Activated T-helper 1 cell treated with anti-CD3 and anti-CD28 coated beads, Interleukin-12 subunit alpha, Interleukin-12 subunit beta, Interleukin-2, Interleukin-4 antibody, amounts not matched to agents 30 ng/mL and 10 ng/mL and 1 ng/mL, durations not matched to agents 14 hours and 24 hours and 36 hours (primary cell): ENCODE measurements at regions of chr17 and their contacts with region 1.

Region 1: GRCh38 chr17:2401426-2402221 is 764 bp upstream of the MNT start:
- DNase-seq: peak; percentile 100
- H3K4me3 Mint-ChIP-seq: peak overlapping the region; percentile 93
- H3K27ac Mint-ChIP-seq: peak overlapping the region; percentile 98
- H3K4me1 Mint-ChIP-seq: peaks cover 54% of the 10 kb centered on the region
- H3K27me3 Mint-ChIP-seq: no peaks in the 10 kb centered on the region

Region 2: GRCh38 chr17:497241-498034 is 1904.2 kb before region 1 on chr17:
- intact Hi-C with region 1: no loop called
- DNase-seq: no peak
- H3K4me3 Mint-ChIP-seq: peak overlapping the region; percentile 71
- H3K27ac Mint-ChIP-seq: peak overlapping the region; percentile 91
- H3K4me1 Mint-ChIP-seq: peaks cover 53% of the 10 kb centered on the region
- H3K27me3 Mint-ChIP-seq: no peaks in the 10 kb centered on the region

Region 3: GRCh38 chr17:2303204-2304188 is 98.1 kb before region 1 on chr17 and contains the starts of genes SMG6 and SRR:
- intact Hi-C with region 1: loop called (anchors 1 kb)
- DNase-seq: peak; percentile 88
- H3K4me3 Mint-ChIP-seq: peak within 1 kb of the TSS; percentile 92
- H3K27ac Mint-ChIP-seq: peak within 1 kb of the TSS; percentile 85
- H3K4me1 Mint-ChIP-seq: peaks cover 46% of the 10 kb centered on the region
- H3K27me3 Mint-ChIP-seq: no peaks in the 10 kb centered on the region
- total RNA-seq, gene SMG6: 35.3 and 39.5 TPM in 2 replicates
- total RNA-seq, gene SRR: 14.9 and 17.4 TPM in 2 replicates

Region 4: GRCh38 chr17:2386400-2387085 is 15.1 kb before region 1 on chr17:
- intact Hi-C with region 1: loop called (anchors 1 kb)
- DNase-seq: no peak
- H3K4me3 Mint-ChIP-seq: no peak overlapping the region
- H3K27ac Mint-ChIP-seq: no peak overlapping the region
- H3K4me1 Mint-ChIP-seq: peaks cover 10% of the 10 kb centered on the region
- H3K27me3 Mint-ChIP-seq: no peaks in the 10 kb centered on the region

Region 5: DNA sequence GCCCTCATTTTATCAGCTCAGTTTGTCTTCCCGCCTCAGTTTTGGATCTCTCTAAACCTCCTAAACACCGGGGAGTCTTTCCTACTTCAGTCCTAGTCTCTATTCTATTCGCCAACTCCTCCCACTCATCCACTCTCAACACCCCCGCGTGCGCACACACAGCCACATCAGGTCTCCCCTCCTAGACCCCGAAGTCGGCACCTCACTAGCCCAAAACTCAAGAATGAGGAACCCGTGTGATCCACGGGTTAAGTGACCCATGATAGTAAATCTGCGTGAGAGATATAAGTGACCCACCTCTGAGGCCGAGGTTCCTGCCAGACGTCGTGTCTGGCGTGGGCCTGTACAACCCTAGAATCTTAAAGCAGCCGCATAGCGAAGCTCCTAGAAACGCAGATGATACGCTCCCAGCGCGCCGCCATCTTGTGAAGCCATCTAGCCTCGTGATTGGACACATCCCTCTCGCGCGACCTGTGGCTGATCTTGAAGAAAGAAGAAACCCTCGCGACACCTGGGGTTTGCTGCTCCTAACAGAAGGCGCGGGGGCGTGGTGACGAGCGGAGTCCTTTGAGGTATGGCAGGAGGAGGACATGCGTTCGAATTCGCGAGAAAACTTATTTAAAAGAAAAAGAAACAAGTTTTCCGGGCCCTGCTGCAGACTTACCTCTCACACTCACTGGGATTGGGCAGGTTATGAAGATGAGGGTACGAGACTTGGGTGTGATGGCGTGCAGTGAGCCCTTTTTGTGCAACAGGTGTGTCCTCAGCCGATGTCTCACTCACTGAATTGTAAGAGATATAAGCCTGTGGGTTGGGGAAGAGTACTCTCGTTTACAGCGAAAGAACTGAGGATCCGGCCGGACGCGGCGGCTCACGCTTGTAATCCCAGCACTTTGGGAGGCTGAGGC is 110.1 kb after region 1 on chr17 and contains the start of gene METTL16:
- intact Hi-C with region 1: loop called (anchors 5 kb)
- DNase-seq: peak; percentile 95
- H3K4me3 Mint-ChIP-seq: no peak within 1 kb of the TSS
- H3K27ac Mint-ChIP-seq: peak within 1 kb of the TSS; percentile 9
- H3K4me1 Mint-ChIP-seq: peaks cover 11% of the 10 kb centered on the region
- H3K27me3 Mint-ChIP-seq: peaks cover 3% of the 10 kb centered on the region
- total RNA-seq, gene METTL16: 53.9 and 57.9 TPM in 2 replicates